CD8-positive, alpha-beta T cell (primary cell): ENCODE measurements at regions of chrX and their contacts with region 1.

Region 1: GRCh38 chrX:103817502-103817901 is 14.6 kb downstream of the RAB9B start:
- DNase-seq: peak in 3 of 9 experiments; percentile 40 to 66 (median 60)
- ATAC-seq: peak; percentile 64
- H3K4me3 ChIP-seq: no peak overlapping the region
- H3K4me3 Mint-ChIP-seq: no peak overlapping the region
- H3K27ac ChIP-seq: no peak overlapping the region
- H3K27ac Mint-ChIP-seq: no peak overlapping the region
- H3K4me1 ChIP-seq: no peaks in the 10 kb centered on the region
- H3K4me1 Mint-ChIP-seq: no peaks in the 10 kb centered on the region
- H3K27me3 ChIP-seq: no peaks in the 10 kb centered on the region
- H3K27me3 Mint-ChIP-seq: peaks cover 8% of the 10 kb centered on the region
- CTCF ChIP-seq: peak; percentile 58

Region 2: DNA sequence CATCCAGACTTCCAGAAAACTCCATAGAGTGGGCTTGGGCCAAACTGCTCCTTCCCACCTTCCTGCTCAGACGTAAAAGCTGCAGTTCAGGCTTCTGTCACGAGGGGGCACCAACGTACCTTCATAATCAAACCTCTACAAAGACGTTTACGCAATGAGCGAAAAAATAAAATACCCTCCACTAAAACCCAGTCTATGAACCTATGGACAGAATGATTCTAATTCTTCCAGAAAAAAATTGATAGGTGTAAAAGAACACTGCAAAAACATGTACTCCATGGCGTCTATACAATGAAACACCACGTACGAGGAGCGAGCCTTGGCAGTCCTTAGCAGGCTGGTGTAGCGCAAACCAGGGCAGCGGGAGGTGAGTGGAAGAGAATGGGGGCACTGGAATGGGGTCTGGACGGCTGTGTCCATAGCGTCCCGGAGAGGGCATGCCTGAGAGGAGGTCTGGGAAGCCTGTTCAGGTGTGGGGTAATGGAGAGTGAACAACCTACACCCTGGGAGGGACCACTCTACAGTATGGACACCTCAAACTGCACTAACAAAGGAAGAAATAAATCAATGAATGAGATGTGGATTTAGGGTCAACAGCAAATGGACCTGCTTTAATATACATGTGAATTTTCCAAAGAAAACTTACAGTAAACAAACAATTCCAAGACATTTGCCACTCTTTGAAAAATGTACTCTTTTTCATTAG is 283.8 kb before region 1 on chrX:
- CTCF ChIA-PET with region 1: interaction called, 15 read pairs
- POLR2A ChIA-PET with region 1: no interaction called
- intact Hi-C with region 1: loop called (anchors 1 kb)
- DNase-seq: peak; percentile 38 to 78 (median 65)
- ATAC-seq: peak; percentile 69
- H3K4me3 ChIP-seq: peak overlapping the region in 1 of 2 experiments; percentile 4
- H3K4me3 Mint-ChIP-seq: peak overlapping the region; percentile 75
- H3K27ac ChIP-seq: no peak overlapping the region
- H3K27ac Mint-ChIP-seq: no peak overlapping the region
- H3K4me1 ChIP-seq: no peaks in the 10 kb centered on the region
- H3K4me1 Mint-ChIP-seq: peaks cover 3% of the 10 kb centered on the region
- H3K27me3 ChIP-seq: no peaks in the 10 kb centered on the region
- H3K27me3 Mint-ChIP-seq: peaks cover 2% of the 10 kb centered on the region
- CTCF ChIP-seq: peak; percentile 68